ENCODE measurements at regions of chr4 and their contacts with region 1.

Region 1: GRCh38 chr4:10157478-10158332 is 41.1 kb upstream of the WDR1 start:
- DNase-seq: peak; percentile 86
- H3K4me3 ChIP-seq: peak overlapping the region in 2 of 4 donors; percentile 1 to 3
- H3K27ac ChIP-seq: peak overlapping the region; percentile 63 to 76 (median 72)
- H3K4me1 ChIP-seq: peaks cover 0 to 23% (median 15%) of the 10 kb centered on the region in 4 donors
- H3K27me3 ChIP-seq: no peaks in the 10 kb centered on the region
- CTCF ChIP-seq: peak; percentile 77 to 83 (median 78)
- EP300 ChIP-seq: no peak
- POLR2A ChIP-seq: no peak

Region 2: GRCh38 chr4:10116580-10117358 is 40.9 kb before region 1 on chr4 and contains the start of gene WDR1:
- intact Hi-C with region 1: loop called (anchors 2 kb)
- DNase-seq: peak; percentile 99
- H3K4me3 ChIP-seq: peak within 1 kb of the TSS; percentile 71 to 94 (median 86)
- H3K27ac ChIP-seq: peak within 1 kb of the TSS; percentile 90 to 98 (median 96)
- H3K4me1 ChIP-seq: peaks cover 0 to 65% (median 59%) of the 10 kb centered on the region in 4 donors
- H3K27me3 ChIP-seq: no peaks in the 10 kb centered on the region
- CTCF ChIP-seq: no peak
- EP300 ChIP-seq: peak in 1 of 4 donors; percentile 8
- POLR2A ChIP-seq: peak; percentile 98 to 99
- total RNA-seq, gene WDR1: 171 to 267 (median 238) TPM

Region 3: GRCh38 chr4:10239982-10240654 is 82.4 kb after region 1 on chr4:
- intact Hi-C with region 1: no loop called
- DNase-seq: no peak
- H3K4me3 ChIP-seq: no peak overlapping the region
- H3K27ac ChIP-seq: no peak overlapping the region
- H3K4me1 ChIP-seq: peaks cover 0 to 6% (median 0%) of the 10 kb centered on the region in 4 donors
- H3K27me3 ChIP-seq: no peaks in the 10 kb centered on the region
- CTCF ChIP-seq: no peak
- EP300 ChIP-seq: no peak
- POLR2A ChIP-seq: no peak

Region 4: DNA sequence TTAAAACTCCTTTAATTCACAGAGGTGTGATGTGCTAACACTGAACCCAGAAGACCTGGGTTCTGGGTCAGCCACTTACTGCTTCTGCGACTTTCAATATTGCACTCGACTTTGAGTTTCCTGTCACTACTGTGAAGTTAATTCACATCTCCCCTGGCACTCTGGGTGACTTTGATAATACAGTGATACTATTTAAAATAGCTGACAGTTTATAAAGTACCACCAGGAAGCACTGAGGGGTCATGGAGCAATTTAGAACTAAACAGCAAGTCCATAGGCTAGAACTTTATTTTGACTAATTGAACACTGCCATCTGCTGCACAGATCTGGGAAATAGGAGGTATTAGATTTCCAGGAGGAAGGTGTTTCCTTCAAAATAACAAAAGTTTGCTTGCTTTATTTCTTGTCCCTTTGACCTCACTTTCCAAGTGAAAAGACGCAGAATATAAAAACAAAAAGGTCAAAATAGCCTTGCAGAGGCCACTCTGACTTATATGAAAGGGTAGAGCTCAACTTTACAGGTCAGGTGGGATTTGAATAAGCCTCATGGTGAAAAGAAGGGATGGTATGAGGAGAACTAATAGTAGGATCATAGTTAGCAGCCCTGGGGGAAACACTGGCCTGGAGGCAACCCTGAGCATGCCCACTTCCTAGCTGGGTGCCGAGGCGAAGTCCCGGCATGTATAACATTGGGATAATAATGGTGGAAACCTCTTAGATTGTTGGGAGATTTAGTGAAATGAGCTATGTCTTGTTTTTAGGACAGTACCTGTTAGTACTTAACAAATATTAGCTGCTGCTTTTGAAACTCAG is 246.1 kb after region 1 on chr4:
- intact Hi-C with region 1: loop called (anchors 1 kb)
- DNase-seq: no peak
- H3K4me3 ChIP-seq: no peak overlapping the region
- H3K27ac ChIP-seq: no peak overlapping the region
- H3K4me1 ChIP-seq: no peaks in the 10 kb centered on the region
- H3K27me3 ChIP-seq: no peaks in the 10 kb centered on the region
- CTCF ChIP-seq: peak; percentile 34 to 68 (median 57)
- EP300 ChIP-seq: no peak
- POLR2A ChIP-seq: no peak

Region 5: GRCh38 chr4:10461091-10461849 is 303.6 kb after region 1 on chr4:
- intact Hi-C with region 1: loop called (anchors 2 kb)
- DNase-seq: no peak
- H3K4me3 ChIP-seq: peak overlapping the region in 3 of 4 donors; percentile 20 to 34 (median 34)
- H3K27ac ChIP-seq: no peak overlapping the region
- H3K4me1 ChIP-seq: peaks cover 0 to 18% (median 14%) of the 10 kb centered on the region in 4 donors
- H3K27me3 ChIP-seq: peaks cover 10 to 45% (median 27%) of the 10 kb centered on the region in 3 donors
- CTCF ChIP-seq: peak; percentile 11 to 90 (median 47)
- EP300 ChIP-seq: no peak
- POLR2A ChIP-seq: no peak

Region 6: DNA sequence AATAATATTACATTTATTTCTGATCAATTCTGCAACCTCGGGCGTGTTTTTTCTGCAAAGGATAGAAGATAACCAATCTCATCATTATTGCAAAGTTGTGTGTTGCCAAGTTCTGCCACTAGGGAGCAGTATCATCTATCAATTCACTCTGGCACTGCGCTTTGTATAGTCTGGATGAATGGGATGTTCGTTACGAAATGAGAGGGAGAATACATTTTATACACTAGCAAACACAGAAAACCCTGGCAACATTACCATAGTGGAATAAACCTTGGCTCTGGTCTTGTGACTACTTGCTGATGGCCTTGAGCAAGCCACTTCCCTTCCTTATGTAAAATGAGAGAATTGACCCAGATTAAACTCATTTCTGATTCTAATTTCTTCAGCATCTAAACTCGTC is 397.0 kb after region 1 on chr4:
- intact Hi-C with region 1: loop called (anchors 2 kb)
- DNase-seq: no peak
- H3K4me3 ChIP-seq: no peak overlapping the region
- H3K27ac ChIP-seq: no peak overlapping the region
- H3K4me1 ChIP-seq: peaks cover 0 to 4% (median 2%) of the 10 kb centered on the region in 4 donors
- H3K27me3 ChIP-seq: no peaks in the 10 kb centered on the region
- CTCF ChIP-seq: peak; percentile 31 to 77 (median 58)
- EP300 ChIP-seq: no peak
- POLR2A ChIP-seq: no peak